Aorta (tissue), 5 donors: ENCODE measurements at regions of chr3 and their contacts with region 1.

Region 1: DNA sequence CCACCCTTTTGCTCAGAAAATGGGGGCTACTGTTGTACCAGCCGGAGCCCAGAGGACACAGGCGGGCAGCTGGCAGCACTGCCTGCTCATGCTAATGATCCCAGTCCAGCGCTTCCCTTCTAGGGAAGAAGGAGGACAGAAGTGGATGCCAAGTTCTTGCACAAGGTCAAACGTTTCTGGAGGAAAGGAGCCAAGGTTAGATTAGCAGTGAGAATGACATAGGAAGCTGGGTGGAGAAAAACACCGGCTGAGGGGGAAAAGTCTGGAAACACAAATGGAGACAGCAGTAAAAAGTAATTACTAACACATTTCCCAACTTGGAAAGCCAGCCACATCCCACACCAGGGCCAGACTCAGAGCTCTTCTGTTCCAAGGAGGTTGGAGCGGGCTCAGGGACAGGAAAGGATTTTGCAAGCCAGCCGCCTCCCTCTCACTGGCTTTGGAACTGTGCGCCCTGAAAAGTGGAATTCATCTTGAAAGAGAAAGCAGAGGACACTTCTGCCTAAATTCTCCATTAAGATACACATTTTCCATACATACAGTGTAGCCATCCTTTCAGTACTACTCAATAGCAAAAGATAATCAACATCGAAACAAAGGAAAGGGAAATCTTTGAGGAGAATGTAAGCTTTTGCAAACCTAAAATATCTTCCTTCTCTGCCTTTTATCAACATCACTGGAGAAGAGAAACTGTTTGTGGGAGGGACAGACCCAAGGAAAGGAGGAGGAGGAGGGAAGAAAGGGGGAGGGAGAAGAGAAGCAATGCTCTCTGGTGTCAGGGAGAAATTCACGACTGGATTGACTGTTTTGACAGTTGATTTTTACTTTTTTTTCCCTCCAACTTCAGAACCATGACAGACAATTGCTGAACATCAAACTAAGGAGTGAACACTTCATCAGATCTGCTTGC is 133.6 kb downstream of the CD47 start:
- DNase-seq: peak; percentile 85 to 87
- ATAC-seq: peak; percentile 95
- H3K4me3 ChIP-seq: no peak overlapping the region
- H3K27ac ChIP-seq: peak overlapping the region; percentile 79 to 94
- H3K4me1 ChIP-seq: peaks cover 2 to 13% of the 10 kb centered on the region in 2 donors
- H3K27me3 ChIP-seq: no peaks in the 10 kb centered on the region

Region 2: GRCh38 chr3:107690522-107691138 is 266.6 kb before region 1 on chr3:
- intact Hi-C with region 1: no loop called
- DNase-seq: no peak
- ATAC-seq: no peak
- H3K4me3 ChIP-seq: no peak overlapping the region
- H3K27ac ChIP-seq: no peak overlapping the region
- H3K4me1 ChIP-seq: no peaks in the 10 kb centered on the region
- H3K27me3 ChIP-seq: no peaks in the 10 kb centered on the region

Region 3: GRCh38 chr3:108208831-108209230 is 251.6 kb after region 1 on chr3:
- intact Hi-C with region 1: loop called in 1 of 2 experiments (anchors 10 kb)
- DNase-seq: no peak
- ATAC-seq: no peak
- H3K4me3 ChIP-seq: no peak overlapping the region
- H3K27ac ChIP-seq: no peak overlapping the region
- H3K4me1 ChIP-seq: no peaks in the 10 kb centered on the region
- H3K27me3 ChIP-seq: no peaks in the 10 kb centered on the region